Head of caudate nucleus (tissue), 42 donors: ENCODE measurements at regions of chr5 and their contacts with region 1.

Region 1: DNA sequence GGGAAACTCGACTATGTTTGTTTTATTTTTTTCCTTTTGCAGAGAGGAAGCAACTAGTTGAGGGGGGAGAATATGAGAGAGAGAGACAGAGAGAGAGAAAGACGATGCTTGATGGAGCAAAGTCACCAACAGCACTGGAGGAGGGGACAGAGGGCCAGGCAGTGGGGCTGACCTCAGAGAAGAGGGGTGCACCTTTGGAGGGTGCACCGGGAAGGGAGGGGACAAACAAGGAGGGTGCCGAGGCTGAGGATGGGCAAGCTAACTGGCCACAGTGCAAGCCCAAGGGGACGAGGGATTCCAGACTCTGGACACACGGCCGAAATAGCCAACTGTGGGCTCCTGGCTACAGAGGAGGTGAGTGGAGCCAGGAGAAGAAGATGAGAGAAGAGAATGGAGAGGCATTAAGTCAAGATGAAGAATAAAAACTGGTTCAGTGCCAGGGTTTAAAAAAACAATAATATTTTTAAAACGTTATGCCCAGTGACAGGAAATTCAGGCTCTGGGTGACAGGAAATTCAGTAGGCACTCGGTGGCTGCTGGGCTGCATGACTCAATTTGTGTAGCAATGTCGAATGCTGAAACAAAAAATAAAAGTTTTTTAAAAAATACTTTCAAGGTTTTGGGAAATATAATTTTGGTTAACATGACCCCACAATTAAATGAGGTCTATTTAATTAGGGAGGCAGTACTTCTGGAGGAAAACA is 13.3 kb upstream of the GLRX start:
- DNase-seq: no peak

Region 2: DNA sequence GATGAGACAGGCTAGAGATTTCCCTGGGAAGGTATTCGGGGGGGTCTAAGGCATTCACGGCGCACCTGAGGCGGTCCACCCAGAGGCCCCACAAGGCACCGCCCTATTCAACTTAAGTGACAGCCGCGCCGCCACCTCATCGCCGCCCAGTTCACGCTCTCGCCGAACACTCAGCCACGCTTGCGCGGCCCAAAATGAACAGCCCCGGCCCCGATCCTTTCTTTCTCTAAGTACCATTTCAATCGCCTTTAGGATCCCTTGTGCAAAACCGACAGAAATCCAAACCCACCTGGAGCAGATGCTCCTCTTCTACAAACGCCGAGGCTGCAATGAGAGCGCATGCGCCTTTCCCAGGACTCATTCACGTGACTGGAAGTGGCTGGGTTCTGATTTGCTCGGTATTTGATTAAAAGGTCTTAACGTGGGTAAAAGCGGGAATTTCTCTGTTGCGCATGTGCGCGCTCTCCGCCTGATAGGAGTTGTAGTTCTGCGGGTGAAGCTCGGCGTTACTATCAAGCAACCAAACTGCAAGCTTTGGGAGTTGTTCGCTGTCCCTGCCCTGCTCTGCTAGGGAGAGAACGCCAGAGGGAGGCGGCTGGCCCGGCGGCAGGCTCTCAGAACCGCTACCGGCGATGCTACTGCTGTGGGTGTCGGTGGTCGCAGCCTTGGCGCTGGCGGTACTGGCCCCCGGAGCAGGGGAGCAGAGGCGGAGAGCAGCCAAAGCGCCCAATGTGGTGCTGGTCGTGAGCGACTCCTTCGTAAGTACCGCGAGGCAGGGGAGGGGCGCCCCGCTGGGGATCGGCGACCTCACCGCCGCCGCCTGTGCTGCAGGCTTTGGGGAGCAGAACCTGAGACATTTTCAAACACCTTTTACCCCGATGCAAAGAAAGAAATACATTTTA is 280.9 kb before region 1 on chr5 and contains the starts of genes ARSK and SKIC3:
- intact Hi-C with region 1: loop called (anchors 10 kb)
- DNase-seq: peak; percentile 87 to 98 (median 95)